ENCODE measurements at regions of chr6 and their contacts with region 1.

Region 1: GRCh38 chr6:27126815-27127537 is 120.5 kb upstream of the PRSS16 start:
- DNase-seq: peak; percentile 95
- H3K4me3 ChIP-seq: peak overlapping the region in 3 of 4 donors; percentile 31 to 42 (median 38)
- H3K27ac ChIP-seq: peak overlapping the region; percentile 66 to 79 (median 70)
- H3K4me1 ChIP-seq: peaks cover 0 to 6% (median under 1%) of the 10 kb centered on the region in 4 donors
- H3K27me3 ChIP-seq: no peaks in the 10 kb centered on the region
- CTCF ChIP-seq: peak in 3 of 4 experiments; percentile 63 to 77 (median 77)
- EP300 ChIP-seq: no peak
- POLR2A ChIP-seq: no peak

Region 2: DNA sequence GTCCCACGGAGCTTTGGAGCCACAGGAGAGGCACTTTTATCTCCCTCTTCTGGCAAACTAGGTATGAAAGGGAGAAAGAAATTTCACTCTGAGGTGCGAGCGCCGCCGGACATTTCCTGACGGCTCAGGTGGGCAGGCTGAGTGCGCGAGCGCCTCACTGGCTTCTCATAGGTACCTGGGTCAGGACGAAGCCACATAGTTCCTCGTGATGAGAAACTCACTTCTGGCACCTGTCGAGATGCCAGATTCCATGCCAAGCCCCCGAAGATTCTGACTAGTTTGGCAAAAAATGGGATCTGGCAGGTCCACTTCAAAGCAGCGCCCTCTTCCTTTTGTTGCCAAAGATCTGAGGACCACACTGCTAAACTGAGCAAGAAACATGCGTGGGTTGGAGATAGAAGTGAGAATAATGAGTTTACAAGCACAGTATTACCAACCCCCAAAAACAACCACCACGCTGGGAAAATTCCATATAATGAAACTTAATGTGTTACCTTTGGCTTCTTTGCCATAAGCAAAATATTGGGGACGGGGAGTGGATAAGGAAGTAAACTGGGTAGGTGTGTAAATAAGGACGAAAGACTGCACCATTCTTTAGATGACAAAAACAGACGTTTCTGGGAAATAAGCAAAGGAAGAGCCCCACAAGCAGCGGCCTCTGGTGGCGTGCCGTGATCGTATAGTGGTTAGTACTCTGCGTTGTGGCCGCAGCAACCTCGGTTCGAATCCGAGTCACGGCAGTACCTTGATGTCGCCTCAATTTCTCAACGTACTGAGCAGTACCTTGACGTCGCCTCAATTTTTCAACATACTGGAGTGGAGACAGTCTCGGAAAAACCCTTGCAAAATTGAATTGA is 30.7 kb after region 1 on chr6:
- intact Hi-C with region 1: loop called (anchors 2 kb)
- DNase-seq: peak; percentile 85
- H3K4me3 ChIP-seq: peak overlapping the region; percentile 21 to 37 (median 29)
- H3K27ac ChIP-seq: no peak overlapping the region
- H3K4me1 ChIP-seq: peaks cover 0 to 14% (median 10%) of the 10 kb centered on the region in 4 donors
- H3K27me3 ChIP-seq: peaks cover 0 to 5% (median 4%) of the 10 kb centered on the region in 3 donors
- CTCF ChIP-seq: peak in 3 of 4 experiments; percentile 18 to 39 (median 37)
- EP300 ChIP-seq: no peak
- POLR2A ChIP-seq: no peak

Region 3: GRCh38 chr6:27902335-27903314 is 775.6 kb after region 1 on chr6:
- intact Hi-C with region 1: loop called (anchors 5 kb)
- DNase-seq: peak; percentile 90
- H3K4me3 ChIP-seq: peak overlapping the region; percentile 45 to 57 (median 51)
- H3K27ac ChIP-seq: peak overlapping the region; percentile 83 to 87 (median 86)
- H3K4me1 ChIP-seq: peaks cover 0 to 4% (median 0%) of the 10 kb centered on the region in 4 donors
- H3K27me3 ChIP-seq: no peaks in the 10 kb centered on the region
- CTCF ChIP-seq: no peak
- EP300 ChIP-seq: no peak
- POLR2A ChIP-seq: no peak